Heart right ventricle (tissue), 16 donors: ENCODE measurements at regions of chr7 and their contacts with region 1.

Region 1: DNA sequence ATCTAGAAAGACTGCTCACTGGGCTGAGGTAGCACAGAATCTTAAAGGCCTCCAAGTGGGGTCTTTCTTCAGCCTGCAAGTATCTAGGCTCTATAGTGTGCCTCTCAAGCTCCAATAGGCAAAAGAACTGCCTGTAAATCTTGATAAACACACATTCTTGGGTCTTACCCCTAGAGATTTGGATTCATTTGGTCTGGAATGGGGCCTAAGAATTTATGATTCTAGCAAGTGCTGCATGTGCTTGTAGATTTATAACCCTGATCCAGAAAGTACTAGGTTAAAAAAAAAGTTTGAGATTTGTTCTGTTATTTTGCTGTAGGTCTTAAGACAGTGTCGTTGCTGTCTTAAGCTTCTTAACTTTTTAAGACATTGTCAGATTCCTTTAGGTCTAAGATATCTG is 74.1 kb downstream of the RALA start:
- DNase-seq: no peak
- ATAC-seq: no peak
- H3K4me3 ChIP-seq: no peak overlapping the region
- H3K27ac ChIP-seq: no peak overlapping the region
- H3K4me1 ChIP-seq: peaks cover 0 to 23% (median 0%) of the 10 kb centered on the region in 9 donors
- H3K27me3 ChIP-seq: no peaks in the 10 kb centered on the region
- CTCF ChIP-seq: no peak

Region 2: GRCh38 chr7:38382684-38383083 is 1314.8 kb before region 1 on chr7:
- intact Hi-C with region 1: loop called in 1 of 10 experiments (anchors 5 kb)
- DNase-seq: no peak
- ATAC-seq: peak in 1 of 8 donors; percentile 79
- H3K4me3 ChIP-seq: no peak overlapping the region
- H3K27ac ChIP-seq: no peak overlapping the region
- H3K4me1 ChIP-seq: no peaks in the 10 kb centered on the region
- H3K27me3 ChIP-seq: no peaks in the 10 kb centered on the region
- CTCF ChIP-seq: no peak